ENCODE measurements at regions of chr16 and their contacts with region 1.

Region 1: GRCh38 chr16:50024684-50025536 is at the start of gene CNEP1R1:
- DNase-seq: peak; percentile 95
- ATAC-seq: peak; percentile 97
- H3K4me3 ChIP-seq: peak within 1 kb of the TSS; percentile 100
- H3K27ac ChIP-seq: peak within 1 kb of the TSS; percentile 34
- H3K4me1 ChIP-seq: no peaks in the 10 kb centered on the region
- H3K27me3 ChIP-seq: peaks cover 4% of the 10 kb centered on the region; the same call in 1 of the 2 replicates
- CTCF ChIP-seq: peak; percentile 99
- POLR2A ChIP-seq: peak; percentile 45; the same call in 1 of the 2 replicates
- RAD21 ChIP-seq: peak; percentile 94
- total RNA-seq, gene CNEP1R1: 22.0 and 38.6 TPM in 2 replicates

Region 2: GRCh38 chr16:49407873-49408550 is 616.9 kb before region 1 on chr16:
- CTCF ChIA-PET with region 1: no interaction called
- POLR2A ChIA-PET with region 1: no interaction called
- dilution Hi-C with region 1: no loop called
- in situ Hi-C with region 1: no loop called
- intact Hi-C with region 1: loop called (anchors 5 kb)
- DNase-seq: peak; percentile 49
- ATAC-seq: peak; percentile 97
- H3K4me3 ChIP-seq: no peak overlapping the region
- H3K27ac ChIP-seq: no peak overlapping the region
- H3K4me1 ChIP-seq: no peaks in the 10 kb centered on the region
- H3K27me3 ChIP-seq: no peaks in the 10 kb centered on the region
- CTCF ChIP-seq: peak; percentile 76
- POLR2A ChIP-seq: no peak
- RAD21 ChIP-seq: peak; percentile 75

Region 3: DNA sequence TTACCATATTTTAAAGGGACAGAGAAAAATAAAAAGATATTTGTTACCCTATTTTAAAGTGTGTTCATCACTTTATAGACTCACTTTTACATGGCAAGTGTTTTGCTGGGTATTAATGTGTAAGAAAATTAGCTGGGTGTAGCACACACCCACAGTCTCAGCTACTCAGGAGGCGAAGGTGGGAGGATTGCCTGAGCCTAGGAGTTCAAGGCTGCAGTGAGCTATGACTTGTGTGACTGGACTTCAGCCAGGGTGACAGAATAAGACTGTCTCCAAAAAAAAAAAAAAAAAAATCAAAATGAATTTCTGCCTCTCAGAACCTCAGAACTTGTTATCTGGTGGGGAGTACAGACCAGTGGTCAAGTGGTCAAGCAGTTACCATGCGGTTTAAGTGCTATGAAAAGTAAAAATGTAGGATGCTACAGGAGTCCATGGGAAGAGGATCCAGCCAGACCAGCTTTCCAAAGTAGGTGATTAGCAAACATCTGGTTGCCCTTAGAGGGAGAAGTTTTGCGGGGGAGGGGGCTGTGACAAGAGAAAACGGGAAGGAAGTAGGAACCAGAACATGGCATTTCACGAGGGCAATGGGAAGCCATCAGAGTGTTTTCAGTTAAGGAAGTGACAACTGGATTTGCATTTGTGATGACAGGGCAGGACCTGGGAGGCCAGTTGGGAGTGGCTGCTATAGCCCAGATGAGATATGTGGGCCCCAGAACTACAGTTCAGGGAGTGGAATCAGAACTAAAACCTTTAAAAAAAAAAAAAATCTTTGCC is 14.0 kb after region 1 on chr16:
- CTCF ChIA-PET with region 1: interaction called, 15 read pairs
- POLR2A ChIA-PET with region 1: no interaction called
- dilution Hi-C with region 1: no loop called
- in situ Hi-C with region 1: no loop called
- intact Hi-C with region 1: no loop called
- DNase-seq: no peak
- ATAC-seq: no peak
- H3K4me3 ChIP-seq: no peak overlapping the region
- H3K27ac ChIP-seq: no peak overlapping the region
- H3K4me1 ChIP-seq: no peaks in the 10 kb centered on the region
- H3K27me3 ChIP-seq: peaks cover 3% of the 10 kb centered on the region
- CTCF ChIP-seq: no peak
- POLR2A ChIP-seq: no peak
- RAD21 ChIP-seq: no peak

Region 4: GRCh38 chr16:50195276-50195675 is 170.4 kb after region 1 on chr16:
- CTCF ChIA-PET with region 1: no interaction called
- POLR2A ChIA-PET with region 1: no interaction called
- dilution Hi-C with region 1: no loop called
- in situ Hi-C with region 1: no loop called
- intact Hi-C with region 1: no loop called
- DNase-seq: peak; percentile 72
- ATAC-seq: peak; percentile 88
- H3K4me3 ChIP-seq: peak overlapping the region; percentile 47; the same call in 1 of the 2 replicates
- H3K27ac ChIP-seq: peak overlapping the region; percentile 68; the same call in 1 of the 2 replicates
- H3K4me1 ChIP-seq: peaks cover 8% of the 10 kb centered on the region
- H3K27me3 ChIP-seq: no peaks in the 10 kb centered on the region
- CTCF ChIP-seq: no peak
- POLR2A ChIP-seq: no peak
- RAD21 ChIP-seq: no peak

Region 5: GRCh38 chr16:50354629-50355456 is 329.9 kb after region 1 on chr16:
- CTCF ChIA-PET with region 1: interaction called, 4 read pairs
- POLR2A ChIA-PET with region 1: no interaction called
- dilution Hi-C with region 1: no loop called
- in situ Hi-C with region 1: no loop called
- intact Hi-C with region 1: loop called (anchors 2 kb)
- DNase-seq: no peak
- ATAC-seq: no peak
- H3K4me3 ChIP-seq: no peak overlapping the region
- H3K27ac ChIP-seq: no peak overlapping the region
- H3K4me1 ChIP-seq: no peaks in the 10 kb centered on the region
- H3K27me3 ChIP-seq: no peaks in the 10 kb centered on the region
- CTCF ChIP-seq: peak; percentile 60
- POLR2A ChIP-seq: no peak
- RAD21 ChIP-seq: peak; percentile 50

Region 6: GRCh38 chr16:50509521-50510341 is 484.8 kb after region 1 on chr16:
- CTCF ChIA-PET with region 1: no interaction called
- POLR2A ChIA-PET with region 1: no interaction called
- dilution Hi-C with region 1: no loop called
- in situ Hi-C with region 1: no loop called
- intact Hi-C with region 1: loop called (anchors 5 kb)
- DNase-seq: peak; percentile 6
- ATAC-seq: no peak
- H3K4me3 ChIP-seq: no peak overlapping the region
- H3K27ac ChIP-seq: no peak overlapping the region
- H3K4me1 ChIP-seq: no peaks in the 10 kb centered on the region
- H3K27me3 ChIP-seq: peaks cover 2% of the 10 kb centered on the region; the same call in 1 of the 2 replicates
- CTCF ChIP-seq: peak; percentile 51
- POLR2A ChIP-seq: no peak
- RAD21 ChIP-seq: peak; percentile 40